Activated naive CD4-positive, alpha-beta T cell treated with anti-CD3 and anti-CD28 coated beads, Interleukin-2, amount 10 ng/mL, durations not matched to agents 7 days and 5 days (primary cell): ENCODE measurements at regions of chr12 and their contacts with region 1.

Region 1: DNA sequence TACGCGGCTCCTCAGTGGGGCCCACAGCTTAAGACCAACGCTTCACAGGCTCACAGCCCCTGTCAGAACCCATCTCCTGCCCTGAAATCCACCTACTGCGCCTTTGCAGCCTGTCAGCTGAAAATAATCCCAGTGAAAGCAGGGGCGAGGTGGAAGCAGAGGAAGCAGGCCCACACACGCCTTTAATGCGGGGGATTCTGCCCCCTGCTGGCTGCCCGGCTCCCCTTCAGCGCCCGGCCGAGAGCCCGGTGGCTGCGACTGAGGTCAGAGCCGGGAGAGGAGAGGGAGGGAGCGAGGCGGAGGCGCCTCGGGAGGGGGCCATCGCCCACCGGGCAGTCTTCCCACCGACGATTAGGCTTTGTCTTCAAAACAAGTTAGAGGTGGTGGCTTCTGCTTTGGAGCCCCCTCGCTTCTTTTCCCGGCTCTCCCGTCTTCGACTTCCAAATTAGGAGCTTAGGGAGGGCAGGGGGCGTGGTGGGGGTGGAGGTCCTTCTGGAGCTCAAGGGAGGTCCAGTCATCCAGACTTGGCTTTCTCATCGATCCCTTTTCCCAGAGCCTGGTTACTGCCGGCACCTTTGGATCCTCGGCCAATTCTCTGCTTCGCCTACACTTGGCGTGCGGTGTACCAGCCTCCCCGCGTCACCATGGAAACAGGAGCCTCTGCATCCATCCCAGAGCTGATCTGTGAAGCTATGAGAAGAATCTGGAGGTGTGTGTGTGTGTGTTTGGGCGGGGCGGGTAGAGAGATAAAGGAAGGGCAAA is 25.2 kb upstream of the RND1 start:
- DNase-seq: peak; percentile 85
- H3K4me3 Mint-ChIP-seq: no peak overlapping the region
- H3K27ac Mint-ChIP-seq: no peak overlapping the region
- H3K4me1 Mint-ChIP-seq: peaks cover 8% of the 10 kb centered on the region
- H3K27me3 Mint-ChIP-seq: peaks cover 46% of the 10 kb centered on the region

Region 2: DNA sequence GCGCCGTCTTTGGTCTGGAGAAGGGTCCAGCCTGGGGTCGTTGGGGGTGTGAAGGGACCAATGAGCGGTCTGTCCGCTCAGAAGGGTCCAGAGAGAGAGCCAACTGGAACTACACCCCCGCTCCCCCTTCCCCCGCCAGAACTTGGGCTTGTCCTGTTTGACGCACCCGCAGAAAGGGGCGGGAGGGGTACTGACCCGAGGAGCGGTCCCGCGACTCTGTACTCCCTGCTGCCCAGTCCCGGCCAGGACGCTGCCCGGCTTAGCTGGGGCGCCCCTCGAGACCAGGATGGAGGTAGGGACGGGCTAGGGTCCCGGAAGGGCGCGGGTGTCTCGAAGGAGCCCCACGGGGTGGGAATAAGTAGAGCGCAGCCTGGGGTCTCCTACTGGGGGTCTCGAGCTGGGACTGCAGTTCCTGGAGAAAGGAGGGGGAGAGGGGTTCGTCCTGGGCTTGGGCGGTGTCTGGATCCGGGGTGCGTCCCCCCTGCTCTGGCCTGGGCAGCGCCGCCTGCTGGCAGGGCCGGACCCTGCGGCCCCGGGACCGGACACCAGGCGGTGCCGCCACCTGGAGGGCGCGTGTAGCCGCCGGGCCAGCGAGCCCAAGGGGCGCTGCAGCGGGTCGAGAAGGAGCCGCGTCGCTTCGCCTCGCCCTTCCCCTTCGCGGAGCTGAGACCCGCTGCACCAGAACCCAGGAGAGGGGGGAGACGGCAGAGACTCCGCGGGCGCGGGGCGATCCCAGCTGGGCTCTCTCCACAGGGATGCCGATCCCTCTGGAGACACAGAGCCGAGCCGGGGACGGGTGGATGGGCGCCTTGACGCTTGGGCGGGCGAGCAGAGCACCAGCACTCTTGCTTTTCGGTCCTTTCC is 76.3 kb before region 1 on chr12:
- CTCF ChIA-PET with region 1: interaction called, 10 read pairs
- DNase-seq: peak; percentile 83
- H3K4me3 Mint-ChIP-seq: peak overlapping the region; percentile 91
- H3K27ac Mint-ChIP-seq: peak overlapping the region; percentile 60
- H3K4me1 Mint-ChIP-seq: peaks cover 44% of the 10 kb centered on the region
- H3K27me3 Mint-ChIP-seq: peaks cover 84% of the 10 kb centered on the region

Region 3: GRCh38 chr12:48865434-48866290 is 25.2 kb before region 1 on chr12 and contains the start of gene RND1:
- CTCF ChIA-PET with region 1: interaction called, 16 read pairs
- DNase-seq: peak; percentile 91
- H3K4me3 Mint-ChIP-seq: peak within 1 kb of the TSS; percentile 83
- H3K27ac Mint-ChIP-seq: peak within 1 kb of the TSS; percentile 80
- H3K4me1 Mint-ChIP-seq: peaks cover 26% of the 10 kb centered on the region
- H3K27me3 Mint-ChIP-seq: peaks cover 36% of the 10 kb centered on the region

Region 4: DNA sequence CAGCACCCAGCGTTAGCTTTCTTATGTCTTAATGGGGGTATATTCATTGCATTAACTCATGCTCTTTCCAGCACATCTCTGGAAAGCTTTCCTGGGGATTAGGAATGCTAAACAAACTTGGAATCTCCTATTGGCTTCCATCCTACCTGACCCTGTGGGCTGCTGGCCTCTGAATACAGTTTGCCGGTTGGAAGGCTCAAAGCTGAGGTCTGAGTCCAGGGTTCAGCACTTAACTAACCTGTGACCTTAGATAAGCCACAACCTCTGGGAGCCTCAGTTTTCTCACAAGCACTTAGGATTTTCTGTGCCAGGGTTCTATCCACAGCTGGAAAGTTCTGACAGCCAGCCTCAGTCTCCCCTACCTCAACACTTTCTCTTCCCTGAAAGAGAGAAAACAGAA is 12.3 kb before region 1 on chr12:
- CTCF ChIA-PET with region 1: interaction called, 12 read pairs
- DNase-seq: no peak
- H3K4me3 Mint-ChIP-seq: no peak overlapping the region
- H3K27ac Mint-ChIP-seq: no peak overlapping the region
- H3K4me1 Mint-ChIP-seq: peaks cover 4% of the 10 kb centered on the region
- H3K27me3 Mint-ChIP-seq: peaks cover 75% of the 10 kb centered on the region

Region 5: GRCh38 chr12:48903982-48904411 is 13.2 kb after region 1 on chr12:
- CTCF ChIA-PET with region 1: interaction called, 45 read pairs
- DNase-seq: peak; percentile 91
- H3K4me3 Mint-ChIP-seq: peak overlapping the region; percentile 61
- H3K27ac Mint-ChIP-seq: no peak overlapping the region
- H3K4me1 Mint-ChIP-seq: peaks cover 11% of the 10 kb centered on the region
- H3K27me3 Mint-ChIP-seq: peaks cover 43% of the 10 kb centered on the region